Activated CD8-positive, alpha-beta T cell treated with anti-CD3 and anti-CD28 coated beads for 36 hours (primary cell): ENCODE measurements at regions of chr9 and their contacts with region 1.

Region 1: GRCh38 chr9:89597711-89598625 is 6.8 kb upstream of the GADD45G start:
- DNase-seq: peak; percentile 73
- ATAC-seq: peak; percentile 56
- H3K4me3 Mint-ChIP-seq: no peak overlapping the region
- H3K27ac Mint-ChIP-seq: no peak overlapping the region
- H3K4me1 Mint-ChIP-seq: no peaks in the 10 kb centered on the region
- H3K27me3 Mint-ChIP-seq: peaks cover 2% of the 10 kb centered on the region
- CTCF ChIP-seq: peak; percentile 85

Region 2: DNA sequence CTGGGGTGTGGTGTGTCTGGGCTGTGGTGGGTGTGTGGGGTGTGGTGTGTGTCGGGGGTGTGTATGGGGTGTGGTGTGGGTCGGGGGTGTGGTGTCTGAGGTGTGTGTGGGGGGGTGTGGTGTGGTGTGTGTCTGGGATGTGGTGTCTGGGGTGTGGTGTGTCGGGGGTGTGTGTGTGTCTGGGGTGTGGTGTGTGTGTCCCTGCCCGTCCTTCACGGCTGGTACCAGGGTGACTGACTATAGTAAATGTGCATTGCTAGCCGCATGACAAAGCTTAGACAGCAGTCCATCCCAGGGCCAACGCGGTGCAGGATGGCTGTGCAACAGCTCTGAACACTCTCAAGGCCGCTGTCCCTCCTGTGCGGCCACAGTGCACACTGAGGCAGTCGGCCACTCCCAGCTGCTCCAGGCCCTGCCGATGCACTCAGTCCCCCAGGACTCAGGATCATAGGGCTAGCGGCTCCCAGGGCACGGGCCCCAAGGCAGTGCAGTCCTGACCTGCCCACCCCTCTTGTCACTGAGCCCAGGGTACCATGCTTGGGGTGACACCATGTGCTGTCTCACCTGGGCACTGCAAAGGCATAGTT is 225.6 kb before region 1 on chr9:
- CTCF ChIA-PET with region 1: no interaction called
- POLR2A ChIA-PET with region 1: no interaction called
- intact Hi-C with region 1: no loop called
- DNase-seq: peak; percentile 62
- ATAC-seq: peak; percentile 41
- H3K4me3 Mint-ChIP-seq: no peak overlapping the region
- H3K27ac Mint-ChIP-seq: peak overlapping the region; percentile 87
- H3K4me1 Mint-ChIP-seq: peaks cover 39% of the 10 kb centered on the region
- H3K27me3 Mint-ChIP-seq: no peaks in the 10 kb centered on the region
- CTCF ChIP-seq: no peak

Region 3: GRCh38 chr9:89576404-89576839 is 21.5 kb before region 1 on chr9:
- CTCF ChIA-PET with region 1: interaction called, 22 read pairs
- POLR2A ChIA-PET with region 1: interaction called, 3 read pairs
- intact Hi-C with region 1: no loop called
- DNase-seq: no peak
- ATAC-seq: no peak
- H3K4me3 Mint-ChIP-seq: no peak overlapping the region
- H3K27ac Mint-ChIP-seq: no peak overlapping the region
- H3K4me1 Mint-ChIP-seq: peaks cover 21% of the 10 kb centered on the region
- H3K27me3 Mint-ChIP-seq: peaks cover 17% of the 10 kb centered on the region
- CTCF ChIP-seq: peak; percentile 91

Region 4: DNA sequence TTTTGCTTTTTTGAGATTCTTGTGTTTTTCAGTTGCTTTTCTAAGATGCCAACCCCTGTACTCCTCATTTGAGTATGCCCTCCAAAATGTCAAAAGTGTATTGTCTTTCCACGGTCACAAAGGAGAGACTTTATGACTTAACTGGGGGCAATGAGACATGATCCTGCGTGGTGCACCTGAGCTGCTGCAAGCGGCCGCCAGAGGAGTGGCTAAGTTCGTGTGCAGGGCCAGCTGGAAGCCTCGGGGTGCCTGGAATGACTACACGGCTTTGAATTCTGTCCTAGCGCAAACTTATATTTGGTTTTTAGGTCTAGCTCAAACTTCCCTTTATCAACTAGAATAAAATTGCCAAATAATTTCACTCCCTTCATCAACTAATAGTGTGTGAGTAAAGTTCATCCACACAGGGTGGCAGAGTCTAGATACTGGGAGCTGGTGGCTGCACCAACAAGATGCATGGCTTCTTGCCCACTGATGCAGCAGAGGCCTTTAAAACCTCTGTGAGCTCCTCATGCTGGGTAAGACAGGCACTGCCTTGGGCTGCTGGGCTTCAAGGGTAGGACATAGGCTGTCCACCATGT is 11.5 kb after region 1 on chr9:
- CTCF ChIA-PET with region 1: interaction called, 14 read pairs
- POLR2A ChIA-PET with region 1: no interaction called
- intact Hi-C with region 1: no loop called
- DNase-seq: no peak
- ATAC-seq: no peak
- H3K4me3 Mint-ChIP-seq: no peak overlapping the region
- H3K27ac Mint-ChIP-seq: no peak overlapping the region
- H3K4me1 Mint-ChIP-seq: peaks cover 22% of the 10 kb centered on the region
- H3K27me3 Mint-ChIP-seq: peaks cover 1% of the 10 kb centered on the region
- CTCF ChIP-seq: no peak

Region 5: GRCh38 chr9:89619019-89619418 is 21.1 kb after region 1 on chr9:
- CTCF ChIA-PET with region 1: interaction called, 12 read pairs
- POLR2A ChIA-PET with region 1: no interaction called
- intact Hi-C with region 1: no loop called
- DNase-seq: no peak
- ATAC-seq: peak; percentile 61
- H3K4me3 Mint-ChIP-seq: no peak overlapping the region
- H3K27ac Mint-ChIP-seq: no peak overlapping the region
- H3K4me1 Mint-ChIP-seq: peaks cover 4% of the 10 kb centered on the region
- H3K27me3 Mint-ChIP-seq: no peaks in the 10 kb centered on the region
- CTCF ChIP-seq: no peak